ENCODE measurements at regions of chr12 and their contacts with region 1.

Region 1: DNA sequence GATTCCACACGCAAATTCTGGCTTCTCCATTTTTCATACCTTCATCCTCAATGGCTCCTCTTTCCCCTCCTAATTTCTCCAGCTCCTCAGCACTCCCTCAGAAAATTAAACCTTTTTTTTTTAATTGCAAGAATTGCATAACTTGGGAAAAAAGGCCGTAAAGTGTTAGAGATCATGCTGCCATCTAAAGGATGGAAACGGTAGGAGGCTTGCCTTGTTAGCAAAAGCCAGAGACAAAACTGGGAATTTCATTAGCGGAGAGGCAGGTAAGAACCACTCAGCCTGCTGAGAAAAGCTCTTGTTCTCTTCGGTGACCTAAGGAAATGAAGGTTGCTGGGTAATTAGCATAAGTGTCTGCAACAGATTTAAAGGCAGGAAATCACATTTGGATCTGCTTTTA is 204.3 kb downstream of the AEBP2 start:
- DNase-seq: peak; percentile 66
- H3K4me3 Mint-ChIP-seq: no peak overlapping the region
- H3K27ac Mint-ChIP-seq: no peak overlapping the region
- H3K4me1 Mint-ChIP-seq: peaks cover 6% of the 10 kb centered on the region
- H3K27me3 Mint-ChIP-seq: no peaks in the 10 kb centered on the region
- CTCF ChIP-seq: peak; percentile 50

Region 2: GRCh38 chr12:19181666-19182426 is 461.8 kb before region 1 on chr12:
- CTCF ChIA-PET with region 1: interaction called, 3 read pairs
- POLR2A ChIA-PET with region 1: no interaction called
- intact Hi-C with region 1: loop called (anchors 5 kb)
- DNase-seq: no peak
- H3K4me3 Mint-ChIP-seq: no peak overlapping the region
- H3K27ac Mint-ChIP-seq: no peak overlapping the region
- H3K4me1 Mint-ChIP-seq: peaks cover 5% of the 10 kb centered on the region
- H3K27me3 Mint-ChIP-seq: no peaks in the 10 kb centered on the region
- CTCF ChIP-seq: peak; percentile 21

Region 3: DNA sequence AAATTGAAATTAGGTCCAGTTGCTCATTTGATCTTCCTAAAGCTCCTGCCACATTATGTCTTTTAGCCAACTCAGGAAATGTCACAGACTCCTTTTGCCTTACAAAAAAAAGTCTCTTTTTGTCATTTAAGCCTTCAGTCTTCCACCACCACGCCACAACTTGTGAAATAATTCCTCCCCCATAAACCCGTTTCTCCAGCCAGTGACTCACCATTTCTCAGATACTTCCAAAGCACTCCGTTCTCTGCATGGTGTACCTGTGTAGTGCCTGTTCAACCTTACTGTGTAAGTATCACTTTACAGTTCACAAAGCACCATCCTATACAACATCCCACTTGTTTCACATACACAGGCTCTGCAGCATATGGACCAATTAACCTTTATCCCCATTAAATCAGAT is 343.9 kb before region 1 on chr12:
- CTCF ChIA-PET with region 1: no interaction called
- POLR2A ChIA-PET with region 1: no interaction called
- intact Hi-C with region 1: loop called (anchors 10 kb)
- DNase-seq: peak; percentile 86
- H3K4me3 Mint-ChIP-seq: peak overlapping the region; percentile 39
- H3K27ac Mint-ChIP-seq: peak overlapping the region; percentile 56
- H3K4me1 Mint-ChIP-seq: peaks cover 12% of the 10 kb centered on the region
- H3K27me3 Mint-ChIP-seq: no peaks in the 10 kb centered on the region
- CTCF ChIP-seq: no peak

Region 4: GRCh38 chr12:19507823-19508222 is 135.8 kb before region 1 on chr12:
- CTCF ChIA-PET with region 1: interaction called, 8 read pairs
- POLR2A ChIA-PET with region 1: no interaction called
- intact Hi-C with region 1: loop called (anchors 2 kb)
- DNase-seq: peak; percentile 10
- H3K4me3 Mint-ChIP-seq: no peak overlapping the region
- H3K27ac Mint-ChIP-seq: no peak overlapping the region
- H3K4me1 Mint-ChIP-seq: peaks cover 22% of the 10 kb centered on the region
- H3K27me3 Mint-ChIP-seq: no peaks in the 10 kb centered on the region
- CTCF ChIP-seq: peak; percentile 22

Region 5: GRCh38 chr12:19572920-19573558 is 70.6 kb before region 1 on chr12:
- CTCF ChIA-PET with region 1: interaction called, 23 read pairs
- POLR2A ChIA-PET with region 1: interaction called, 3 read pairs
- intact Hi-C with region 1: loop called (anchors 1 kb)
- DNase-seq: peak; percentile 76
- H3K4me3 Mint-ChIP-seq: no peak overlapping the region
- H3K27ac Mint-ChIP-seq: no peak overlapping the region
- H3K4me1 Mint-ChIP-seq: peaks cover 10% of the 10 kb centered on the region
- H3K27me3 Mint-ChIP-seq: no peaks in the 10 kb centered on the region
- CTCF ChIP-seq: peak; percentile 64

Region 6: GRCh38 chr12:19601333-19601732 is 42.3 kb before region 1 on chr12:
- CTCF ChIA-PET with region 1: interaction called, 13 read pairs
- POLR2A ChIA-PET with region 1: no interaction called
- intact Hi-C with region 1: no loop called
- DNase-seq: no peak
- H3K4me3 Mint-ChIP-seq: no peak overlapping the region
- H3K27ac Mint-ChIP-seq: no peak overlapping the region
- H3K4me1 Mint-ChIP-seq: no peaks in the 10 kb centered on the region
- H3K27me3 Mint-ChIP-seq: no peaks in the 10 kb centered on the region
- CTCF ChIP-seq: no peak